ENCODE measurements at regions of chr1 and their contacts with region 1.

Region 1: DNA sequence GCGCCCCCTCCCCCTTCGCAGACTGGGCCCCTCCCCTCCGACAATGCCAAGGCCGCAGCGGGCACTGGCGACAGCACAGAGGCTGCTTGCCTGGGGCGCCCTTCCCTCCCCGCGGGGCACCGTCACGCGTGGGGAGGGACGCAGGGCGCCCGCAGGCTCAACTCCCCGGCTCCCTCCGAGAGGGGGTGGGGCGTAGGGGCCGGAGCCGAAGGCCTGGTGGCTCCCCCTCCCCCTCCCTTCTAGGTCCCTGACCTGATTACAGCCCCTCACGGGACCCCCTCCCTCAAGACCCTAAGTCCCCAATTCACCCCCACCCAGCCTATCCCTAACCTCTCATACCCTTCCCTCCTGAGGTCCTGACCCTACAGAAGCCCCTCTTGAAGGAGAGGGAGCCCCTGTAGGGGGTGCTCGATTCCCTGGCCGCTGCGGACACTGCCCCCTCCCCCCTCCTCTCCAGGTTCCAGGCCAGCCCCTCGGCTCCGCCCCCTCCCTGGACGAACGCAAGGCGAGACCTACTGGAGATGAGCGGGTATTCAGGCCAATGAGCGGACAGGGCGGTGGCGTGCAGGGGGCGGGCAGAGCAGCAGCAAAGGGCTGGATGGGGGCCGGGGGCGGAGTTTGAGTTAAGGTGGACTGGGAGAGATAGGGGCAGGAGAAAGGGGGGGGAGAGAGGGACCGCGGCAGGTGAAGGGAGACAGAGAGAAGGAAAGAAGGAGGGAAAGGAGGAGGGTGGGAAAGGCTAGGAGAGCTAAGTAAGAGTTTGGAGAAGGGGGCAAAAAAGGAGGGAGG is 733 bp upstream of the ZBTB7B start:
- DNase-seq: peak; percentile 99 to 100 (median 100)
- H3K4me3 ChIP-seq: peak overlapping the region; percentile 82
- H3K27ac ChIP-seq: peak overlapping the region; percentile 94 to 95
- H3K4me1 ChIP-seq: peaks cover 11% of the 10 kb centered on the region
- H3K27me3 ChIP-seq: no peaks in the 10 kb centered on the region
- CTCF ChIP-seq: peak in 2 of 3 donors; percentile 48 to 58
- EP300 ChIP-seq: no peak
- POLR2A ChIP-seq: peak; percentile 92

Region 2: GRCh38 chr1:154558575-154559465 is 443.0 kb before region 1 on chr1 and contains the start of gene UBE2Q1:
- intact Hi-C with region 1: no loop called
- DNase-seq: peak; percentile 99 to 100 (median 99)
- H3K4me3 ChIP-seq: peak within 1 kb of the TSS; percentile 94
- H3K27ac ChIP-seq: peak within 1 kb of the TSS; percentile 58 to 75
- H3K4me1 ChIP-seq: peaks cover 9% of the 10 kb centered on the region
- H3K27me3 ChIP-seq: no peaks in the 10 kb centered on the region
- CTCF ChIP-seq: peak in 1 of 3 donors; percentile 24
- EP300 ChIP-seq: peak; percentile 90
- POLR2A ChIP-seq: peak; percentile 22
- total RNA-seq, gene UBE2Q1: 14.3 to 72.4 (median 58.5) TPM

Region 3: GRCh38 chr1:154896771-154897391 is 105.0 kb before region 1 on chr1:
- intact Hi-C with region 1: no loop called
- DNase-seq: no peak
- H3K4me3 ChIP-seq: no peak overlapping the region
- H3K27ac ChIP-seq: no peak overlapping the region
- H3K4me1 ChIP-seq: no peaks in the 10 kb centered on the region
- H3K27me3 ChIP-seq: no peaks in the 10 kb centered on the region
- CTCF ChIP-seq: no peak
- EP300 ChIP-seq: no peak
- POLR2A ChIP-seq: no peak

Region 4: DNA sequence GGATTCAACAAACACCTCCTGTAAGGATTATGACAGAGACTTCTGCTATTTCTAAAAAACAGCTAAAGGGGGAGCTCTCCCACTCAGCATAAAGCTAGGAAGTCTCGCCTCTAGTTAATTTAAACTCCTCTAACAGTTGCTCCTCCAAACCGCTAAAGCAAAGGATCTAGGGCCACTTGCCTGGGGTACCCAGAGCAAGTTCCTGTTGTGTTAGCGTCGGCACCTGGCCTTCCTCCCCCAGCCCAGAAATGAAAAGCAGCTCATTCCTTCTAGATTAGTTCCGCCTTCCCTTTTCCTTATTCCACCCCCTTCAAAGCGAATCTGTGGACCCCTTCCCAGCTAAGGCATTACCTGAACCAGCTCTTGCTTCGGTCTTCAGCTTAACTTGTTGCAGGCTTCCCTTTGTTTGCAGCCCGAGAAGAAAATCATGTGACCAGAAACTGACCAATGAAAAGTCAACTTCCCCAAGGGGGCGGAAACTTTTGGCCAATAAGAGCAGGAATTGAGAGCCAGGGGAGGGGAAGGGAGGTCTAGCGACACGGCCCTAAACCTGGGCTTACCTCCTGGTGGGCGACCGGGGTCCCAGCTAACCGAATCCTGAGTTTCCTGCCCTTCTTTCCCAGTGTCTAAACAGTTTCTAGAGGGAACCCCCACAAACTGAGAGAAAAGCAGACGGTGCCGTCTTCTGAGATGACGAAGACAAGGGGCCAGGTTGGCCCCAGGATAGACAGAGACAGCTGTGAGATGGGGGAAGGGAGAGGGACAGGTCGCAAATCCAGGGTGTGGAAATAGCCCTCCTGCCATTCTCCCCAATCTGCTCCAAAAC is 45.9 kb before region 1 on chr1 and contains the start of gene PBXIP1:
- intact Hi-C with region 1: loop called (anchors 5 kb)
- DNase-seq: peak; percentile 70 to 87 (median 75)
- H3K4me3 ChIP-seq: peak within 1 kb of the TSS; percentile 57
- H3K27ac ChIP-seq: peak within 1 kb of the TSS; percentile 52 to 78
- H3K4me1 ChIP-seq: peaks cover 41% of the 10 kb centered on the region
- H3K27me3 ChIP-seq: no peaks in the 10 kb centered on the region
- CTCF ChIP-seq: peak in 2 of 3 donors; percentile 9 to 34
- EP300 ChIP-seq: no peak
- POLR2A ChIP-seq: peak; percentile 30
- total RNA-seq, gene PBXIP1: 78.7 to 170 (median 120) TPM

Region 5: GRCh38 chr1:154961497-154962262 is 40.2 kb before region 1 on chr1 and contains the start of gene PYGO2:
- intact Hi-C with region 1: loop called (anchors 5 kb)
- DNase-seq: peak; percentile 75 to 86 (median 82)
- H3K4me3 ChIP-seq: peak within 1 kb of the TSS; percentile 82
- H3K27ac ChIP-seq: peak within 1 kb of the TSS; percentile 96 to 99
- H3K4me1 ChIP-seq: peaks cover 6% of the 10 kb centered on the region
- H3K27me3 ChIP-seq: no peaks in the 10 kb centered on the region
- CTCF ChIP-seq: peak; percentile 4 to 96 (median 92)
- EP300 ChIP-seq: no peak
- POLR2A ChIP-seq: peak; percentile 72
- total RNA-seq, gene PYGO2: 17.2 to 53.0 (median 42.5) TPM

Region 6: GRCh38 chr1:154974063-154974807 is 27.6 kb before region 1 on chr1 and contains the start of gene CKS1B:
- intact Hi-C with region 1: loop called in 1 of 4 experiments (anchors 2 kb)
- DNase-seq: peak; percentile 97 to 98 (median 98)
- H3K4me3 ChIP-seq: peak within 1 kb of the TSS; percentile 77
- H3K27ac ChIP-seq: peak within 1 kb of the TSS; percentile 92 to 98
- H3K4me1 ChIP-seq: peaks cover 11% of the 10 kb centered on the region
- H3K27me3 ChIP-seq: no peaks in the 10 kb centered on the region
- CTCF ChIP-seq: peak in 1 of 3 donors; percentile 31
- EP300 ChIP-seq: no peak
- POLR2A ChIP-seq: peak; percentile 91
- total RNA-seq, gene CKS1B: 12.2 to 29.9 (median 24.8) TPM

Measured in ovary (tissue), 10 donors.